ENCODE measurements at regions of chr7 and their contacts with region 1.

Region 1: GRCh38 chr7:44999245-45000095 is 531 bp upstream of the CCM2 start:
- DNase-seq: peak; percentile 99
- H3K4me3 ChIP-seq: peak overlapping the region; percentile 59 to 92 (median 84)
- H3K27ac ChIP-seq: peak overlapping the region; percentile 80 to 88
- H3K4me1 ChIP-seq: peaks cover 24 to 64% (median 55%) of the 10 kb centered on the region in 4 experiments
- H3K27me3 ChIP-seq: no peaks in the 10 kb centered on the region

Region 2: GRCh38 chr7:44534501-44534900 is 465.0 kb before region 1 on chr7:
- CTCF ChIA-PET with region 1: no interaction called
- POLR2A ChIA-PET with region 1: no interaction called
- DNase-seq: peak; percentile 22 to 63 (median 61)
- H3K4me3 ChIP-seq: no peak overlapping the region
- H3K27ac ChIP-seq: no peak overlapping the region
- H3K4me1 ChIP-seq: no peaks in the 10 kb centered on the region
- H3K27me3 ChIP-seq: no peaks in the 10 kb centered on the region

Region 3: DNA sequence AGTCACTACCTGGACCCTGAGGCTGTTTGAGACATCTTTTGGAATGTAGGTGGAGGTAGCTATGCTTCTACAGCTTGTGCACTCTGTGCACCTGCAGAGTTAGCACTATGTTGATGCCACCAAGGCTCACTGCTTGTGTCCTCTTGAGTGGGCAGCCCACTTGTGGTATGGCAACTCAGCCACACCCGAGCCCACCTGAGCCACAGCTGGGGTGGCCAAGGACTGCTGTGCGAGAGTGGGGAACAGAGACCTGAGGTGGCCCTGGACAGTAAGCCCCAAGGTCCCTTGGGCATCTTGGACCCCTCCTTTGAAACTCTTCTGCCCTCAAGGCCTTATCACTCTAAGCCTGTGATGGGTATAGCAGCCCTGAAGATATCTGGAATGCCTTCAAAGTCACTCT is 46.3 kb before region 1 on chr7:
- CTCF ChIA-PET with region 1: no interaction called
- POLR2A ChIA-PET with region 1: no interaction called
- DNase-seq: no peak
- H3K4me3 ChIP-seq: no peak overlapping the region
- H3K27ac ChIP-seq: no peak overlapping the region
- H3K4me1 ChIP-seq: no peaks in the 10 kb centered on the region
- H3K27me3 ChIP-seq: no peaks in the 10 kb centered on the region

Region 4: GRCh38 chr7:44980393-44981034 is 19.0 kb before region 1 on chr7:
- CTCF ChIA-PET with region 1: interaction called, 204 read pairs
- POLR2A ChIA-PET with region 1: interaction called, 19 read pairs
- DNase-seq: peak in 2 of 3 donors; percentile 86 to 87
- H3K4me3 ChIP-seq: peak overlapping the region in 2 of 7 experiments; percentile 26 to 38
- H3K27ac ChIP-seq: peak overlapping the region; percentile 87 to 96
- H3K4me1 ChIP-seq: peaks cover 19 to 94% (median 74%) of the 10 kb centered on the region in 4 experiments
- H3K27me3 ChIP-seq: no peaks in the 10 kb centered on the region

Region 5: DNA sequence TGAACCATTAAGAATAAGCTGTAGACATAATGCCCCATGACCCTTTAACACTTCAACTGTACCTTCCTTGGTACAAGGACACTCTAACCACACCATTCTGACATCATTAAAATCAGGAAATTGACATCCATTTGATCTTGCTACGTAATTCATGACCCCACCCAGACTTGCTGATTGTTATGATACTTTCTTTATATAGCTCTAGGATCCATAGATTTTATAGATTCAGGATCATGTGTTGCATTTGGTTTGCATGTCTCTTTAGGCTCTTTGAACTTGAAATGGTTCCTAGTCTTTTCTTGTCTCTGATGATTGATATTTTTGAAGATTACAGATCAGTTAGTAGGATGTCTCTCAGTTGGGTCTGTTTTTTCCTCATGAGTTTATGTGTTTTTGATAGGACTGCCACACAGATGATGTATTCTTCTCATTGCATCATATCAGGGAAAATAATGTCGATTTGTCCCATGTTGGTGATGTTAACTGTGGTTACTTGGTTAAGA is 14.0 kb after region 1 on chr7:
- CTCF ChIA-PET with region 1: interaction called, 36 read pairs
- POLR2A ChIA-PET with region 1: no interaction called
- DNase-seq: no peak
- H3K4me3 ChIP-seq: no peak overlapping the region
- H3K27ac ChIP-seq: no peak overlapping the region
- H3K4me1 ChIP-seq: peaks cover 0 to 2% (median 0%) of the 10 kb centered on the region in 4 experiments
- H3K27me3 ChIP-seq: no peaks in the 10 kb centered on the region

Region 6: GRCh38 chr7:45021604-45022296 is 22.3 kb after region 1 on chr7:
- CTCF ChIA-PET with region 1: interaction called, 29 read pairs
- POLR2A ChIA-PET with region 1: interaction called, 49 read pairs
- DNase-seq: peak; percentile 33 to 83 (median 75)
- H3K4me3 ChIP-seq: no peak overlapping the region
- H3K27ac ChIP-seq: peak overlapping the region in 1 of 2 experiments; percentile 47
- H3K4me1 ChIP-seq: peaks cover 5 to 41% (median 29%) of the 10 kb centered on the region in 4 experiments
- H3K27me3 ChIP-seq: no peaks in the 10 kb centered on the region

Region 7: GRCh38 chr7:45026984-45027773 is 27.7 kb after region 1 on chr7:
- CTCF ChIA-PET with region 1: interaction called, 29 read pairs
- POLR2A ChIA-PET with region 1: interaction called, 49 read pairs
- DNase-seq: peak; percentile 84 to 95 (median 92)
- H3K4me3 ChIP-seq: peak overlapping the region; percentile 68 to 99 (median 93)
- H3K27ac ChIP-seq: peak overlapping the region; percentile 89 to 90
- H3K4me1 ChIP-seq: peaks cover 12 to 68% (median 58%) of the 10 kb centered on the region in 4 experiments
- H3K27me3 ChIP-seq: no peaks in the 10 kb centered on the region